Mammary epithelial cell (primary cell): ENCODE measurements at regions of chr16 and their contacts with region 1.

Region 1: GRCh38 chr16:8963825-8964441 is at the start of gene USP7:
- DNase-seq: peak; percentile 88
- H3K4me3 ChIP-seq: peak within 1 kb of the TSS; percentile 69 to 80 (median 69)
- H3K27ac ChIP-seq: peak within 1 kb of the TSS; percentile 24
- H3K4me1 ChIP-seq: peaks cover 16% of the 10 kb centered on the region
- H3K27me3 ChIP-seq: no peaks in the 10 kb centered on the region
- CTCF ChIP-seq: no peak
- total RNA-seq, gene USP7: 52.7 to 113 TPM

Region 2: GRCh38 chr16:8989099-8989878 is 25.4 kb after region 1 on chr16:
- CTCF ChIA-PET with region 1: no interaction called
- dilution Hi-C with region 1: no loop called
- in situ Hi-C with region 1: no loop called
- intact Hi-C with region 1: loop called (anchors 2 kb)
- DNase-seq: no peak
- H3K4me3 ChIP-seq: no peak overlapping the region
- H3K27ac ChIP-seq: no peak overlapping the region
- H3K4me1 ChIP-seq: peaks cover 4% of the 10 kb centered on the region
- H3K27me3 ChIP-seq: no peaks in the 10 kb centered on the region
- CTCF ChIP-seq: no peak